ENCODE measurements at regions of chr17 and their contacts with region 1.

Region 1: DNA sequence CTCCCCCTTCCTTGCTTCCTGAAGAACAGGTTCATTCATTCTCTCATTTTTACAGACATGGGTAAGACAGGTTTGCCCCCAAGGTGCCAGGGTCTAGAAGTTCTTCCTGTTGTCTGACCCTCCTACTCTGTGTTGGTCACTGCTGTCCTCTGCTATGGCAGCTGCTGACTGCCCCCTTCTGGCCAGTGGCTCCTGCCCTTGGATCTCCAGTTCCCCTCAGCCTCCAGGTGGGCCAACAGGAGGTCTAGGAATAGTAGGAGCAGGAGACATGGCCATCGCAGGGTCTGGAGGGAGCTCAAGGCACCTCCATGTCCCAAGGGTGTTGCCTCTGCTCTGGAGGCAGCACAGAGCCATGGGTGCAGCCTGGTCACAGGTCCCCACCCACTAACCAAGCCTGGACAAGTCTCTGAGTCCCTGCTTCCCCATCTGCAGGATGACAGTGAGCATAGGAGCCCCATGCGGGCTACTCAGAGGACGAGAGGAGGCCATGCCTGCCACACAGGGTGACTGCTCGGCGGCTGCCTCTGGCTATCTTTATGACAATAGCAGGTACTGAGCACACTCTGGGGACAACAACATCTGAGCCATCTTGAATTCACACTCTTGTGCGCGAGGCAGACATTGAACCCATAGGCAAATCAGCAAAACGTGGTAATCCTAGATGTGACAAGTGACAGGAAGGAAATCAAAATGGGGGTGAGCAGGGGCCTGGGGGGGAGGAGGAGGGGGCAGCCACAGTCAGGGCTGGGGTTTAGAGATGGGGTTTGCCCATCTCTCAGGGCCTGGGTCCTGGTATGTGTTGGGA is 27.0 kb upstream of the NXPH3 start:
- DNase-seq: no peak

Region 2: DNA sequence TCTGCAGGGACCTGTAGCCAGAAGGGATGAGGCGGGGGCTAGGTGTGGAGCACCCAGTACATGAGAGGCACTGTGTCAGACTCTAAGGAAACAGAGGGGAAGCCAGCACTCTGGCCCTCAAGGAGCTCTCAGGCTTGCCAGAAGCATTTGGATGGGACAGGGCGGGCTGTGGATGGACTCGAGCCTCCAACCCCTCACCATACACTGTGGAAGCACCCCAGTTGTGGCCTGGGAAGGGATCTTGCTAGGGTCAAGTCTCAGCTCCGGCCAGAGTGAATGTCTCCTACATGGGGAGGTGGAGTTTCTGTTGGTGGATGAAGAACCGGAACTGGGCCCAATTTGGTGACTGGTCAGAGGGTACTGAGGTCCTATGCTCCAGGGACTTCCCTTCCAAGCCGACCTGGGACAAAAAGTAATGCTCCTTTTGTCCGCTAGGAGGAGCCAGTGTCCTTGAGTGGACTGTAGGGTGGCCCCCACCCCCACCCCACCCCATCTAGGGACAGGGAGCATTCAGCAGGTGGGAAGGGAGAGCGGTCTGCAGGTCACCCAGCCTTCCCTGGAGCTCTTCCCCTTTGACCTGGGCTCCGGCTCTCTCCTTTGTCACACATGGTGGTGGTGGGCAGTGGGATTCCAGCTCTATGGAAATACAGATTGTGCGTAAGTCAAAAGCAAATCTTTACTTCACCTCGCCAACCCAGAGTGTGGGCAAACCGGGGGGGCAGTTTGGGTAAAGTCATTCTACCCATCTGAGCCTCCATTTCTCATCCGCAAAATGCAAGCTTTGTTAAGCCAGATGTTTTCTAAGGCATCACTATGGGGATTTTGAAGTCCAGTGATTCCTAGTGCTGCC is 113.7 kb before region 1 on chr17:
- intact Hi-C with region 1: loop called (anchors 2 to 5 kb)
- DNase-seq: no peak